Activated B cell treated with CpG ODN at 0.5 μM for 24 hours (primary cell): ENCODE measurements at regions of chr1 and their contacts with region 1.

Region 1: GRCh38 chr1:62783723-62784508 is at the start of gene ATG4C:
- DNase-seq: peak; percentile 79
- ATAC-seq: peak; percentile 94
- H3K4me3 Mint-ChIP-seq: no peak within 1 kb of the TSS
- H3K27ac Mint-ChIP-seq: no peak within 1 kb of the TSS
- H3K4me1 Mint-ChIP-seq: peaks cover 20% of the 10 kb centered on the region
- H3K27me3 Mint-ChIP-seq: no peaks in the 10 kb centered on the region
- CTCF ChIP-seq: no peak
- total RNA-seq, gene ATG4C: 24.2 and 28.4 TPM in 2 replicates

Region 2: DNA sequence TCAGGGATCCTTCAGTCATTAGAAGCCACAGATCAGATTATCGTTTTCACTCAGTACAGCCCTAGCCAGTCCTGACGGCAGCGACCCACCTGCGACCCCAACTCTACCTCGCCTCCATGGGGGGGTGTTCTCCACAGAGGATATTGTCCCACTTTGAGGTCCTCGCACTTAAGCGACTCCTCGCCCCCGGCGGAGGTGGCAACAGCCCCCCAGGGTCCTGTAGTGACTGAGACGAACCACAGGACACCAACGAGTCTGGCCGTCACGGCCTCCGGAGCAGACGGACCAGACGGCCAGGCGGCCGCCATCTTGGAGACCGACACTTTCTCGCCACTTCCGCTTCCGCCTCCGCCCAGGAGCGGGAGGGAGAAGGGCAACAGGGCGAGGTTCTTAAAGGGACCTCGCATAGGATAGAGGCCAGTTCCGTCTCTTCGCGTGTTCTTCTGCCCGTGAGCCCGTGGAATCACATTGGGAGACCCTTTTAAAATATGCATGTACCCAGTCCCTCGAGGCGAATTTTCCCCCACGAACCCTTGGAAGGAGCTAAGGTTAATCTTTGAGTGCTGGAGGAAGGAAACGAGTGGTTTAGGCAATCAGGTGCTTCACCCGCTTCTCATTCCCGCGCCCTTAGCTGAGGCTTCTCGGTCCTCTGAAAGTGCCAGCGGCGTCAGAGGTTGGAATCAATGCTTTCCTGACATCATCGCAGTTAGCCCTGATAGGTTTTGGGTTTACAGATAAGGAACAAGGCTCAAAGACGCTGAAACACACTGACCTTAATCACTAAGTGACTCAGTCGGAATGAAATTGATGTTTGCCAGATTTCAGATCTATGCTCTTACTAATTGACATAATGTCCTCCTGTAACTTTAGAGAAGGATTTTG is 1058.9 kb before region 1 on chr1 and contains the start of gene TM2D1:
- CTCF ChIA-PET with region 1: no interaction called
- POLR2A ChIA-PET with region 1: no interaction called
- intact Hi-C with region 1: loop called (anchors 10 kb)
- DNase-seq: peak; percentile 81
- ATAC-seq: peak; percentile 97
- H3K4me3 Mint-ChIP-seq: peak within 1 kb of the TSS; percentile 99
- H3K27ac Mint-ChIP-seq: peak within 1 kb of the TSS; percentile 98
- H3K4me1 Mint-ChIP-seq: peaks cover 20% of the 10 kb centered on the region
- H3K27me3 Mint-ChIP-seq: no peaks in the 10 kb centered on the region
- CTCF ChIP-seq: no peak
- total RNA-seq, gene TM2D1: 33.6 and 41.4 TPM in 2 replicates

Region 3: DNA sequence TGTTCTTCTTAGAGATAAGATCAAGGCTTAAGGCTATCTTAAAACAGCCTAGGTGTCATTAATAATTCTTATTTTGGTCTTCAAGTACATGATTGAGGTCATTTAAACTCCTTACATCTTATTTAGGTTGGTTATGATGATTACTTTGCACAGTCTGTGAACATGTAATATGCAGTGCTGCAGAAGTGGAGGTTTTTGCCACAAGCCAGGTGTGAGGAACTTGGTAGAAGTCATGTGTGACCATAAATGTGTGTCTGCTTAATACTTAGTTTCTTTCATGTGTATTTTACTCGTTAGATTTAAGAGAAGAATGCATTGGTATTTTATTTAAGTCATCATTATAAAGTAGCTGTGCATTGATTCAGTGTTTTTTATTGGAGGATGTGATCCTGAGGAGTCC is 10.1 kb after region 1 on chr1:
- CTCF ChIA-PET with region 1: interaction called, 3 read pairs
- POLR2A ChIA-PET with region 1: interaction called, 13 read pairs
- intact Hi-C with region 1: loop called (anchors 1 kb)
- DNase-seq: no peak
- ATAC-seq: peak; percentile 71
- H3K4me3 Mint-ChIP-seq: peak overlapping the region; percentile 58
- H3K27ac Mint-ChIP-seq: peak overlapping the region; percentile 92
- H3K4me1 Mint-ChIP-seq: peaks cover 64% of the 10 kb centered on the region
- H3K27me3 Mint-ChIP-seq: no peaks in the 10 kb centered on the region
- CTCF ChIP-seq: no peak

Region 4: GRCh38 chr1:62810420-62811274 is 26.7 kb after region 1 on chr1:
- CTCF ChIA-PET with region 1: interaction called, 4 read pairs
- POLR2A ChIA-PET with region 1: interaction called, 22 read pairs
- intact Hi-C with region 1: loop called (anchors 1 kb)
- DNase-seq: no peak
- ATAC-seq: peak; percentile 85
- H3K4me3 Mint-ChIP-seq: peak overlapping the region; percentile 52
- H3K27ac Mint-ChIP-seq: peak overlapping the region; percentile 88
- H3K4me1 Mint-ChIP-seq: peaks cover 47% of the 10 kb centered on the region
- H3K27me3 Mint-ChIP-seq: no peaks in the 10 kb centered on the region
- CTCF ChIP-seq: no peak

Region 5: GRCh38 chr1:63522891-63523728 is 739.2 kb after region 1 on chr1 and contains the starts of genes EFCAB7 and ITGB3BP:
- CTCF ChIA-PET with region 1: no interaction called
- POLR2A ChIA-PET with region 1: no interaction called
- intact Hi-C with region 1: loop called (anchors 10 kb)
- DNase-seq: peak; percentile 78
- ATAC-seq: peak; percentile 87
- H3K4me3 Mint-ChIP-seq: peak within 1 kb of the TSS; percentile 97
- H3K27ac Mint-ChIP-seq: peak within 1 kb of the TSS; percentile 98
- H3K4me1 Mint-ChIP-seq: peaks cover 22% of the 10 kb centered on the region
- H3K27me3 Mint-ChIP-seq: no peaks in the 10 kb centered on the region
- CTCF ChIP-seq: no peak
- total RNA-seq, gene EFCAB7: 7.5 and 8.6 TPM in 2 replicates
- total RNA-seq, gene ITGB3BP: 24.9 and 27.0 TPM in 2 replicates